Activated T-helper 1 cell treated with anti-CD3 and anti-CD28 coated beads, Interleukin-12 subunit alpha, Interleukin-12 subunit beta, Interleukin-2, Interleukin-4 antibody, amounts not matched to agents 30 ng/mL and 10 ng/mL and 1 ng/mL, durations not matched to agents 14 hours and 24 hours and 36 hours (primary cell): ENCODE measurements at regions of chr6 and their contacts with region 1.

Region 1: DNA sequence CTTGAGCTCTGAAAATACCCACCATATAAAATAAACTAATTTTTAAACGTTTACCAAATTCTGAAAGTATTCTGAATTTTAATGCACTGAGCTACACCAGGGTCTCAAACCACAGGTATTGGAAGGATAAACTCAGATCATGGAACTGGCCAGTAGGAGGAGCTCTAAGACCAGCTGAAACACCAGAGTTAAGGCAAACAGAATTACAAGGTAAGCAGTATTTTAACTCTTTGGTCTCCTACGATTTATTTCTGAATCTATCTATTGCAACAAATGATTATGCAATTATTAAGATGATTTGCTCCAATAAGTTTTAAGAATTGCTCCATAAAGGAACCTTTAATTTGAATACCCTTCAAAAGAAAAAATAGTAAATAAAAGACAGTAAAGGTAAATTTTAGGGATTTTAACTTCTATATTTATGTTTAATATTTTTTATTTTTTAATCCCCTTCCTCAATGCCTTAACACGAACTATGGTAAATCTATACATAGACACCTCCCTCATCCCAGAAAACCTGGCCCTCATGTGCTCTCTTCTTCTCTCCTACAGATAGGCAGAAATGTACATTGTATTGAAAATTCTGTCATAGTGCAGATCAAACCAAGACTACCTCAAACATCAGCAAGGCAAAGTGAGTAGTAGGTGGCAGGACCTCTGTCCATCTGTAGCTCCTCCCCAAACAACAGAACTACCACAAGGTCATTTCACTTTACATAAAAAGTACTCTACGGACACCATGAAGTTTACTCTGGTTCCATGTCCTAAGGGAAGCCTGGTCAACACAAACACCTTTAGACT is 58.4 kb downstream of the SMLR1 start:
- DNase-seq: peak; percentile 53
- H3K4me3 Mint-ChIP-seq: no peak overlapping the region
- H3K27ac Mint-ChIP-seq: no peak overlapping the region
- H3K4me1 Mint-ChIP-seq: no peaks in the 10 kb centered on the region
- H3K27me3 Mint-ChIP-seq: no peaks in the 10 kb centered on the region

Region 2: DNA sequence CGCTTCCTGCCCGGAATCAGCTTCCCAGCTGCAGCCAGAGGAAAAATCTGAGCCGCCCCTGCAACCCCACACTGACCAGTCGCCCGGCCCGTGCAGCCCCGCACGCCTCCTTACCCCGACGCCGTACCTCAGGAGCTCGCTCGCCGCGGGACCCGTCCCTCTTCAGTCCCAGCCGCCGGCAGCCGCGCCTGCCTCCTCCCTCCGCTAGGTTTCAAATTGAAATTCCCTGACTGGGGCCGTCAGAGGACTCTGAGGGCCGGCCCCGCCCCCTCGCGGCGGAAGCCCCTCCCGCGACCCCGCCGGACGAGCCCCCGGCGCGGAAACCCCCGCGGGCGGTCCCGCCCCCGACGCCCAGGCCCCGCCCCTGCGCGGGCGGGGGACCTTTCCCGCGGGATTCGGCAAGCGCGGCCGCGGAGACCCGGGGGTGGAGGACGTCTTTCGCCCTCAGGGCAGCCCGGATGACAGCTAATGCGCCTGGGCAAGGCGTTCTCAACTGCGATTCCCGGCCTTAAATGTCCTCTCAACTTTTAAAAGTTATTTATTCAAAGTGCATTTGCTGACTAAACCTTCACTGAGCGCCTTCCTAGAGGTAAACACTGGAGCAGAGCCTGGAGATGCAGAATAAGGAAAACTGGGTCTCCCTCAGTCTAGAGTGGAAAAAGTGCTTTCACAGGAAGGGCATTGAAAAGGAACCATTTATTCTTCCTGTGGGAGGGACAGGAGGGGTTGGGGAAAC is 177.6 kb after region 1 on chr6 and contains the start of gene EPB41L2:
- intact Hi-C with region 1: loop called (anchors 1 kb)
- DNase-seq: peak; percentile 76
- H3K4me3 Mint-ChIP-seq: peak within 1 kb of the TSS; percentile 81
- H3K27ac Mint-ChIP-seq: peak within 1 kb of the TSS; percentile 14
- H3K4me1 Mint-ChIP-seq: peaks cover 21% of the 10 kb centered on the region
- H3K27me3 Mint-ChIP-seq: peaks cover 15% of the 10 kb centered on the region
- total RNA-seq, gene EPB41L2: 17.7 and 18.7 TPM in 2 replicates

Region 3: GRCh38 chr6:131116749-131117360 is 231.3 kb after region 1 on chr6:
- intact Hi-C with region 1: loop called (anchors 1 kb)
- DNase-seq: no peak
- H3K4me3 Mint-ChIP-seq: no peak overlapping the region
- H3K27ac Mint-ChIP-seq: no peak overlapping the region
- H3K4me1 Mint-ChIP-seq: no peaks in the 10 kb centered on the region
- H3K27me3 Mint-ChIP-seq: peaks cover 2% of the 10 kb centered on the region

Region 4: DNA sequence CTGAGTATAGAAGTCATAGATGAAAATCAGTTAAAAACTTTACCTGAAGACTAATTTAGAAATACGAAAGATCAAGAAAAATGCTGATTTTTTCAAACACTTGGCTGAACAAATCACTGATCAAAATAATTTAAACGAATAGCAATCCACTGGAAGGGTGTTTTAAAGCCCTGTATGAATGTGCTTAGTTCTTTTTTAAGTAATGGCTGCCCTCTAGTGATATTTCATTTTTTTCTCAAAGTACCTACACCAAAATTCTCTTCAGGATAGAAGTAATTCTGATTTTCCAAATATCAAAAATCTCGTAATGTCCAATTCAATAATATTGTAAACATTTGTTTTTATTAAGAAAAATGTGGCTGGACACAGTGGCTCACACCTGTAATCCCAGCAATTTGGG is 282.2 kb after region 1 on chr6:
- intact Hi-C with region 1: loop called (anchors 1 kb)
- DNase-seq: no peak
- H3K4me3 Mint-ChIP-seq: no peak overlapping the region
- H3K27ac Mint-ChIP-seq: no peak overlapping the region
- H3K4me1 Mint-ChIP-seq: no peaks in the 10 kb centered on the region
- H3K27me3 Mint-ChIP-seq: no peaks in the 10 kb centered on the region

Region 5: DNA sequence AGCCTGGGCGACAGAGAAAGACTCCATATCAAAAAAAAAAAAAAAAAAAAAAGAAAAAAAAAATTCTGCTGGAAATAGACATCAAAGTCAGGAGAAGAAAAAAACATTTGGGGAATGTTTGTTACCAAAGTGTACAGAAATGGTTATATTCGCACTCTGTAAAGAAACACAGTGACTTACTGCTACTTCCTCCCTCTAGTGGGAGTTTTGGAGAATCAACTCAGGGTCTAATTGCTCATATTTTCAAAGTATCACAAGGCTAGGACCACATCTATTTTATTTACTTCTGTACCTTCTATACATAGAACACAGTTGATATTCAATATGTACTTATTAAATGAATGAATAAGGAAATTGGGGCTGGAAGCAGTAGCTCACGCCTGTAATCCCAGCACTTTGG is 711.9 kb after region 1 on chr6:
- intact Hi-C with region 1: loop called (anchors 1 kb)
- DNase-seq: no peak
- H3K4me3 Mint-ChIP-seq: no peak overlapping the region
- H3K27ac Mint-ChIP-seq: no peak overlapping the region
- H3K4me1 Mint-ChIP-seq: no peaks in the 10 kb centered on the region
- H3K27me3 Mint-ChIP-seq: no peaks in the 10 kb centered on the region

Region 6: GRCh38 chr6:131627724-131628682 is 742.4 kb after region 1 on chr6 and contains the start of gene MED23:
- intact Hi-C with region 1: loop called (anchors 1 kb)
- DNase-seq: peak; percentile 92
- H3K4me3 Mint-ChIP-seq: peak within 1 kb of the TSS; percentile 99
- H3K27ac Mint-ChIP-seq: peak within 1 kb of the TSS; percentile 94
- H3K4me1 Mint-ChIP-seq: peaks cover 36% of the 10 kb centered on the region
- H3K27me3 Mint-ChIP-seq: no peaks in the 10 kb centered on the region
- total RNA-seq, gene MED23: 34.0 and 36.3 TPM in 2 replicates

Region 7: DNA sequence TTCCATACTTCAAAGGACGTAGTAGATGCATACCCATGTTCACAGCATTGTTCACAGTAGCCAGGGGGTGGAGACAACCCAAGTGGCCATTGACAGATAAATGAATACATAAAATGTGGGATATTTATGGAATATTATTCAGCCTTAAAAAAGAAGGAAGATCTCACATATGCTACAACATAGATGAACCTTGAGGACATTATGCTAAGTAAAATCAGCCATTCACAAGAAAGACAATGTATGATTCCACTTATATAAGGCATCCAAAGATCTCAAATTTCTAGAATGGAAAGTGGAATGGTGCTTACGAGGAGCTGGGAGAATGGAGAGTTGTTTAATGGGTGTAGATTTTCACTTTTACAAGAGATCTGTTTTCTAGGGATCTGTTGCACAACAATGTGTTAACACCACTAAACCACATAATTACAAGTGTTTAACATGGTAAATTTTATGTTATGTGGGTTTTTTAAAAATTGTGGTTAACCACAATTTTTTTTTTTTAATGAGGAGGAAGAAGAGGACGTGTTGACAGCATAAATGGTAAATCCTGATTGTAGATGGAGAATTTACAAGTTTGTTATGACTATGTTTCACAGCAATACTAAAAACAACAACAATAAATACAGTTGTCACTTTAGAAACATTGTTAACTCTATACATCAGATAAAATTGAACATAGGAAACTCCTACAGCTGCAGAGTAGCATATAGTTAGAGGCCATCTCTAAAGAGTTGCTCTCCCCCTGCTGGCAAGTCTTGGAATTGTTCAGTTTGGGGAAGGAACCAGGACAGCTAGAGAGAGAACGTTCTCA is 1024.0 kb after region 1 on chr6:
- intact Hi-C with region 1: loop called (anchors 5 kb)
- DNase-seq: peak; percentile 60
- H3K4me3 Mint-ChIP-seq: no peak overlapping the region
- H3K27ac Mint-ChIP-seq: no peak overlapping the region
- H3K4me1 Mint-ChIP-seq: peaks cover 9% of the 10 kb centered on the region
- H3K27me3 Mint-ChIP-seq: peaks cover 25% of the 10 kb centered on the region